GM10248 (cell line): ENCODE measurements at regions of chr4 and their contacts with region 1.

Region 1: DNA sequence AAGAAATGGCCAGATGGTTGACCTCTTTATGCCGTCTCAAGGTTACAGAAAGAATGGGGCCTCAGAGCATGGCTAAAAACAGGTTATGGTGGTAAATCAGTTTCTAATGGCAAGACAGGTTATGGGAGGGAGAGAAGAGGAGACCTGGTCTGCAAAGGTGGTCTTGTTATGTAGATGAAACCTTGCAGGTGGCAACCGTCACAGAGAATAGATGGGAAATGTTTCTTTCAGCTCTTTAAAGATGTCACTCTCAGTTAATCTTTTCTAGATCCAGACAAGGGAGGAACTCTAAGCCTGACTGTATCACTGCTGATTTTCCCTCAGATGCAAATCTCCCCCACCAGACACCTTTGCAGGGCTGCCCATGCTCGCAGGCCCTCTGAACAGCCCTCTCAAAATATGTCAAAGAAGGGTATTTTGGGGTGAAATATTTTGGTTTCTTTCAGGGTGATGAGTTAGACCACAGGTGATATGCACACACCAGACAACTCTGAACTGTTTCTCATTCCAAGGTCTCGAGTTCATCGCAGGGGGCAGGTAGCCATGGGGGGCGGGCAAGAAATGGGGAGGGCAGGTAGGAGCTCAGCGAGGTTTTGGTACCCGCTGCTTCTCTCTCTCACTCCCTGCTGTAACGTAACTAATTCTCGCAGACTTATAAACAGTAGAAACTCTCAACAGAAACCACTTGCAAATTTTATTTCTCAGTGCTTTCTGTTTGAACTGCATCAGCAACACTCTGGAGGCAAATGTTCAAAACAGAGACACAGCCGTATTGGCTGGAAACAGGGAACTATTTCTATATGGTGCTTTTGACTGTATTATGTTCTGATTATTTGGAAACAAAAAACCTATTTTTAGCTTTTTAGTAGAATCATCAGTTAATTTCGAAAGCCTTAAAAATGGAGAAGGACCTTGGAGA is 32.4 kb downstream of the CASP3 start:
- DNase-seq: peak; percentile 57
- CTCF ChIP-seq: no peak

Region 2: GRCh38 chr4:184575306-184575705 is 41.6 kb before region 1 on chr4:
- CTCF ChIA-PET with region 1: no interaction called
- POLR2A ChIA-PET with region 1: no interaction called
- DNase-seq: no peak
- CTCF ChIP-seq: no peak

Region 3: DNA sequence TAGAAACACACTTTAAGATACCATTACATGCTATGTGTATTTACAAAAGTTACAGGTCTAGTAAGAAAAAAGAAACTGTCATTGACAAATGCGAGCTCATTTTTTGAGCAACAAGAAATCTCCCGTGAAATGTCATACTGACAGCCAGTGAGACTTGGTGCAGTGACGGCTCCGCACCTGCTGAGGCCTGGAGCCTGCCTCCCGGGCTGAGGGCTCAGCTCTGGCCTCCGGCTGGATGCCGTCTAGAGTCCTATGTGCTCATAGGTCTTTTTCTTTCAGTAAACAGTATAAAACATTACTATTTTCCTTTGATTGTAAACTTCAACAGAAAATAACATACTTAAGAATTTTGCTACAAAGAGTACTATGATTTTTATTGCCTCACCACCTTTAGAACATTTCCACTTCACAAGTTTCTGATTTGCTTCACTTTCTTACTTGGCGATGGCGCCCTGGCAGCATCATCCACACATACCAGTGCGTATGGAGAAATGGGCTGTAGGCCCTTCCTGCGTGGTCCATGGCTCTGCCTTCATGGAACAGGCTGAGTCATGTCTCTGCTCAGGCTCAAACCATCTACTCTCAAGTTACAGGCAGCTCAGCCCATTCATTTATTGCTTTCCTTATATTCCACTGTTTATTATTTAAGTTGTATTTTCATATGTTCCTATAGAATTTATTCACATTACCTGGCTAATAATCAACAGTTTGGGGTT is 11.0 kb after region 1 on chr4:
- CTCF ChIA-PET with region 1: interaction called, 20 read pairs
- POLR2A ChIA-PET with region 1: no interaction called
- DNase-seq: no peak
- CTCF ChIP-seq: no peak